ENCODE measurements at regions of chr19 and their contacts with region 1.

Region 1: DNA sequence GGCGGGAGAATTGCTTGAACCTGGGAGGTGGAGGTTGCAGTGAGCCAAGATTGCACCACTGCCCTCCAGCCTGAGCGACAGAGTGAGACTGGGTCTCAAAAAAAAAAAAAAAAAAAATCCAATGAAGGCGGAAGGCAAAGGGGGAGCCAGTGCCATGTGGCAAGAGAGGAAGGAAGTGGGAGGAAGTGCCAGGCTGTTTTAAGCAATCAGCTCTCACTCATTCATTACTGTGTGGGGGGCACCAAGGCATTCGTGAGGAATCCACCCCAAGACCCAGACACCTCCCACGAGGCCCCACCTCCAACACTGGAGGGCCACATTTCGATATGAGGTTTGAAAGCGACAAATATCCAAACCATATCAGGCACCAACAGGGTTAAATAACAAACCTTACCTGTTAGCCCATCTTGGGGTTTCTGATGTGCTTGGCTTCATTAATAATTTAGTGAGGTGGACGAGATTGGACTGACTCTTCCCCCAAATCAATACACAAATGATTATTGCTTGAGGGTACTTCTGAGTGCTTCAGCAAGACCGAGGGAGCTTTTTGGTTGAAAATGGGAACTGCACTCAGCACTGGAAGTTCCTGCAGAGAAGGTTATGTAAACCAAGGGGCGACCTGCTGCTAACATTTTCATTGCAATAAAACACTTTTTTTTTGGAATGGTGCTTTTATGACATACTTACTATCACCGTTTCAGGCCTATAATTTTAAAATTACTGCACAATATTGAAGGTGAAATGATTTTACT is 7.5 kb upstream of the LRP3 start:
- DNase-seq: no peak
- ATAC-seq: no peak

Region 2: GRCh38 chr19:33143897-33144405 is 42.7 kb before region 1 on chr19:
- intact Hi-C with region 1: loop called (anchors 2 to 5 kb)
- DNase-seq: peak; percentile 60
- ATAC-seq: peak; percentile 95 to 98

Region 3: DNA sequence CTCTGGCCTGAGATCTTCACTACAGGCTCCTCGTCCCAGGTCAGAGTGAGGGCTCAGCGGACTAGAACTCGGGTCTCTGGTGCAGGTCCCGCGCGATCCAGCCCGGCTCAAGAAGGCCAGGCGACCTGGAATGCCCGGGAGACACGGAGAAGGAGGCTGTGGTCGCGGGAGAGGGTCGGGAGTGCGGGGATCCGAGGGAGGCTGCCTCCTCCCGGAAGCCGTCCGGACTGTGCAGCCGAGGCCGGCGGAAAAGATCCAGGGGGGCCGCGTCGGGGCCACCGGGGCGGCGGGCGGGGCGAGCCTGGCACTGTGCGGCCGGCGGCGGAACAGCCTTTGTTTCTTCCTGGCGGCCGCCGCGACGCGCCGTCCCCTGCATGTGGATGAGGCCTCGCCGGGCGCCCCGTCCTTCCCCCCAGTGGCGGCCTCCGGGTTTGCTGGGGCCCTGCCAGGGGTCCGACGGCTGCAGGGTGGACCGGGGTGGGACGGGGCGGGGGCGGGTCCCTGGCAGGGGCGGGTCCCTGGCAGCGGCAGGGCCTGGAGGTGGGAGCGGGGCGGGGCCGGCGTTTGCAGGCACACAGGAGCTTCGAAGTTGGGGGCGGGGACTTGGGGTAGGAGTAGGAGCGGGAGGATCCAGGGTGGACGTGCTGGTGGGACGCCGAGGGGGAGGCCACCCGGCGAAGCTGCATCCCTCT is 40.1 kb after region 1 on chr19:
- intact Hi-C with region 1: no loop called
- DNase-seq: no peak
- ATAC-seq: peak; percentile 30 to 69

Measured in left cardiac atrium (tissue), 4 donors.